HepG2 (cell line): ENCODE measurements at regions of chr10 and their contacts with region 1.

Region 1: GRCh38 chr10:31864834-31865518 is 63.7 kb downstream of the ARHGAP12 start:
- DNase-seq: peak; percentile 48
- ATAC-seq: peak; percentile 74
- H3K4me3 ChIP-seq: peak overlapping the region in 2 of 3 experiments; percentile 7 to 25; a peak in 1 of 6 replicates
- H3K27ac ChIP-seq: peak overlapping the region; percentile 51
- H3K4me1 ChIP-seq: peaks cover 52% of the 10 kb centered on the region
- H3K27me3 ChIP-seq: no peaks in the 10 kb centered on the region; a peak in 1 of 5 replicates
- CTCF ChIP-seq: no peak
- EP300 ChIP-seq: no peak
- POLR2A ChIP-seq: no peak
- RAD21 ChIP-seq: no peak

Region 2: GRCh38 chr10:31723106-31723750 is 141.7 kb before region 1 on chr10:
- CTCF ChIA-PET with region 1: no interaction called
- POLR2A ChIA-PET with region 1: no interaction called
- in situ Hi-C with region 1: no loop called
- intact Hi-C with region 1: no loop called
- DNase-seq: peak; percentile 5
- ATAC-seq: peak; percentile 47; the same call in 1 of the 3 replicates
- H3K4me3 ChIP-seq: no peak overlapping the region
- H3K27ac ChIP-seq: no peak overlapping the region
- H3K4me1 ChIP-seq: no peaks in the 10 kb centered on the region
- H3K27me3 ChIP-seq: no peaks in the 10 kb centered on the region; a peak in 1 of 5 replicates
- CTCF ChIP-seq: no peak
- EP300 ChIP-seq: no peak
- POLR2A ChIP-seq: no peak
- RAD21 ChIP-seq: no peak

Region 3: DNA sequence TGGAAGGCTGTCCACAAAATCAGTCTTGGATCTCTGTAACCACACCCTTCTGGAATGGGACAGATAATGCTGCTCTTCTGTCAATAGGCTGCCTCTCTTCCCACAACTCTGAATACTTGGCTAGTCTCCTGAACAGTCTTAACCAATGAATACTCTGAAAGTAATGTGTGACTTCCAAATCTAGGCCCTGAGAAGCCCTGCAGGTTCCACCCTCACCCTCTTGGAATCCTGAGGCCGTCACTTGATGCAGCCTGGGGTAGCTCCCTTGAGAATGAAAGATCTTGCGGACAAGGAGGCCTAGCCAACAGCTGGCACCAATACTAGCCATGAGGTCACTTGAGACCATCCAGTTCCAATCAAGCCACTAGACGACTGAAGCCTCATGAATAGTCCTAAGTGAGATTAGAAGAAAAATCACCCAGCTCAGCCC is 45.6 kb before region 1 on chr10:
- CTCF ChIA-PET with region 1: no interaction called
- POLR2A ChIA-PET with region 1: no interaction called
- in situ Hi-C with region 1: no loop called
- intact Hi-C with region 1: no loop called
- DNase-seq: no peak
- ATAC-seq: no peak; the same call in 2 of the 3 replicates
- H3K4me3 ChIP-seq: no peak overlapping the region
- H3K27ac ChIP-seq: no peak overlapping the region
- H3K4me1 ChIP-seq: no peaks in the 10 kb centered on the region
- H3K27me3 ChIP-seq: no peaks in the 10 kb centered on the region
- CTCF ChIP-seq: no peak
- EP300 ChIP-seq: no peak
- POLR2A ChIP-seq: no peak
- RAD21 ChIP-seq: no peak

Region 4: GRCh38 chr10:31940839-31941653 is 76.1 kb after region 1 on chr10:
- CTCF ChIA-PET with region 1: no interaction called
- POLR2A ChIA-PET with region 1: interaction called, 3 read pairs
- in situ Hi-C with region 1: loop called (anchors 5 kb)
- intact Hi-C with region 1: loop called (anchors 1 kb)
- DNase-seq: peak; percentile 96
- ATAC-seq: peak; percentile 86
- H3K4me3 ChIP-seq: peak overlapping the region in 1 of 3 experiments; percentile 15; a peak in 2 of 6 replicates
- H3K27ac ChIP-seq: peak overlapping the region; percentile 77
- H3K4me1 ChIP-seq: peaks cover 99% of the 10 kb centered on the region
- H3K27me3 ChIP-seq: no peaks in the 10 kb centered on the region
- CTCF ChIP-seq: no peak
- EP300 ChIP-seq: peak in 1 of 2 experiments; percentile 93; a peak in 2 of 4 replicates
- POLR2A ChIP-seq: no peak
- RAD21 ChIP-seq: no peak

Region 5: GRCh38 chr10:31947144-31947926 is 82.4 kb after region 1 on chr10:
- CTCF ChIA-PET with region 1: interaction called, 22 read pairs
- POLR2A ChIA-PET with region 1: interaction called, 3 read pairs
- in situ Hi-C with region 1: loop called (anchors 5 kb)
- intact Hi-C with region 1: loop called (anchors 1 kb)
- DNase-seq: peak; percentile 82
- ATAC-seq: peak; percentile 87
- H3K4me3 ChIP-seq: no peak overlapping the region
- H3K27ac ChIP-seq: peak overlapping the region; percentile 33
- H3K4me1 ChIP-seq: peaks cover 64% of the 10 kb centered on the region
- H3K27me3 ChIP-seq: no peaks in the 10 kb centered on the region
- CTCF ChIP-seq: peak; percentile 85
- EP300 ChIP-seq: peak in 1 of 2 experiments; percentile 42; a peak in 2 of 4 replicates
- POLR2A ChIP-seq: no peak
- RAD21 ChIP-seq: peak; percentile 85

Region 6: GRCh38 chr10:32005050-32005449 is 140.1 kb after region 1 on chr10:
- CTCF ChIA-PET with region 1: interaction called, 11 read pairs
- POLR2A ChIA-PET with region 1: interaction called, 3 read pairs
- in situ Hi-C with region 1: no loop called
- intact Hi-C with region 1: no loop called
- DNase-seq: peak; percentile 58
- ATAC-seq: peak; percentile 76
- H3K4me3 ChIP-seq: no peak overlapping the region
- H3K27ac ChIP-seq: no peak overlapping the region
- H3K4me1 ChIP-seq: 0 out of 2 replicates have a peak, but pooled peaks cover 9% of the 10 kb centered on the region
- H3K27me3 ChIP-seq: no peaks in the 10 kb centered on the region
- CTCF ChIP-seq: peak; percentile 66
- EP300 ChIP-seq: no peak
- POLR2A ChIP-seq: peak in 1 of 2 experiments; percentile 24; a peak in 2 of 4 replicates
- RAD21 ChIP-seq: peak; percentile 34; the same call in 1 of the 2 replicates

Region 7: DNA sequence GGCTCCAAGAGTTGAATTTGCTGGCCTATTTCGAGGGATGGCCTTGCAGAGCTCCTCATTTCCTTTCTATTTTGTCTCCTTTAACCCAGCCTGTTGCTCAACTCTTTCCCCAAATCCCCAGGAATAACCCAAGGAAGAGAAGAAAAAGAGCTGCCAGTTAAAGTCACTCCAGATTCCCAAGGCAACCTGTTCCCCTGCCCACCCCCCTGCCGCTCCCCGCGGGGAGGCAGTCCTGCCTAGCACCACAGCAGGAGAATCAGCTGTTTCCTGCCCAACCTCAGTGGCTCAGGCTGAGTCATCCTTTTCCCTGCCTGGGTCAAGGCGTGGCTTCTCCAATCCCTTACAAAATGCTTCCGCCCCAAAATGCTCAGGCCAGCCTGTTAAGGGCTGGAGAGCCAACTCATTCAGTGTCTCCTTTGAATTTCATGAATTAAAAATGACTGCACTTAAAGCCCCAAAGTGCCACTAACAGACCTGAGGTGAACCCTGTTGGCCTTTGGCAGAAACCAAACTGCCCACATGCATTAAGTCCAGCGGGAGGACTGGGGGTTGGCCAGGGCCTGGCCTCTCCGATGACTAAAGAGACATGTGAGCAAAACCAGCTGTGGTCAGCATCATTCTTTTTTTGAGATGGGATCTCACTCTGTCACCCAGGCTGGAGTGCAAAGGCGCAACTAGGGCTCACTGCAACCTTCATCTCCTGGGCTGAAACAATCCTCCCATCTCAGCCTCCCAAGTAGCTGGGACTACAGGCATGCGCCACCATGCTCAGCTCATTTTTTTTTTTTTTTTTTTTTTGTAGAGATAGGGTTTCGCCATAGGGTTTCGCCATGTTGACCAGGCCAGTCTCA is 274.5 kb after region 1 on chr10:
- CTCF ChIA-PET with region 1: no interaction called
- POLR2A ChIA-PET with region 1: no interaction called
- in situ Hi-C with region 1: no loop called
- intact Hi-C with region 1: no loop called
- DNase-seq: peak; percentile 57
- ATAC-seq: peak; percentile 79
- H3K4me3 ChIP-seq: no peak overlapping the region
- H3K27ac ChIP-seq: no peak overlapping the region
- H3K4me1 ChIP-seq: peaks cover 57% of the 10 kb centered on the region
- H3K27me3 ChIP-seq: no peaks in the 10 kb centered on the region
- CTCF ChIP-seq: peak; percentile 41
- EP300 ChIP-seq: no peak
- POLR2A ChIP-seq: no peak
- RAD21 ChIP-seq: no peak

Region 8: GRCh38 chr10:32207544-32207943 is 342.6 kb after region 1 on chr10:
- CTCF ChIA-PET with region 1: interaction called, 4 read pairs
- POLR2A ChIA-PET with region 1: no interaction called
- in situ Hi-C with region 1: no loop called
- intact Hi-C with region 1: loop called (anchors 10 kb)
- DNase-seq: peak; percentile 59
- ATAC-seq: peak; percentile 81
- H3K4me3 ChIP-seq: peak overlapping the region in 1 of 3 experiments; percentile 20; a peak in 1 of 6 replicates
- H3K27ac ChIP-seq: no peak overlapping the region
- H3K4me1 ChIP-seq: peaks cover 35% of the 10 kb centered on the region
- H3K27me3 ChIP-seq: 0 out of 5 replicates have a peak, but pooled peaks cover 0 to 1% of the 10 kb centered on the region in 2 experiments
- CTCF ChIP-seq: peak; percentile 86
- EP300 ChIP-seq: no peak
- POLR2A ChIP-seq: no peak
- RAD21 ChIP-seq: peak; percentile 84